Sigmoid colon (tissue), 7 donors: ENCODE measurements at regions of chr16 and their contacts with region 1.

Region 1: GRCh38 chr16:89700100-89700648 is 1.3 kb downstream of the SPATA2L start:
- DNase-seq: peak; percentile 100
- H3K4me3 ChIP-seq: peak overlapping the region; percentile 49 to 68 (median 59)
- H3K27ac ChIP-seq: peak overlapping the region; percentile 70 to 83 (median 76)
- H3K4me1 ChIP-seq: peaks cover 0 to 27% (median 25%) of the 10 kb centered on the region in 4 donors
- H3K27me3 ChIP-seq: peaks cover 0 to 28% (median 7%) of the 10 kb centered on the region in 3 donors
- CTCF ChIP-seq: peak; percentile 72 to 88 (median 78)
- EP300 ChIP-seq: peak in 2 of 4 donors; percentile 57 to 61
- POLR2A ChIP-seq: peak in 1 of 2 donors; percentile 22

Region 2: GRCh38 chr16:89093602-89094251 is 606.4 kb before region 1 on chr16 and contains the start of gene ACSF3:
- intact Hi-C with region 1: no loop called
- DNase-seq: peak; percentile 76
- H3K4me3 ChIP-seq: peak within 1 kb of the TSS; percentile 52 to 86 (median 82)
- H3K27ac ChIP-seq: peak within 1 kb of the TSS; percentile 62 to 80 (median 68)
- H3K4me1 ChIP-seq: peaks cover 0 to 32% (median 25%) of the 10 kb centered on the region in 4 donors
- H3K27me3 ChIP-seq: peaks cover 0 to 28% (median 27%) of the 10 kb centered on the region in 3 donors
- CTCF ChIP-seq: no peak
- EP300 ChIP-seq: no peak
- POLR2A ChIP-seq: no peak
- total RNA-seq, gene ACSF3: 19.7 to 31.6 (median 24.8) TPM

Region 3: DNA sequence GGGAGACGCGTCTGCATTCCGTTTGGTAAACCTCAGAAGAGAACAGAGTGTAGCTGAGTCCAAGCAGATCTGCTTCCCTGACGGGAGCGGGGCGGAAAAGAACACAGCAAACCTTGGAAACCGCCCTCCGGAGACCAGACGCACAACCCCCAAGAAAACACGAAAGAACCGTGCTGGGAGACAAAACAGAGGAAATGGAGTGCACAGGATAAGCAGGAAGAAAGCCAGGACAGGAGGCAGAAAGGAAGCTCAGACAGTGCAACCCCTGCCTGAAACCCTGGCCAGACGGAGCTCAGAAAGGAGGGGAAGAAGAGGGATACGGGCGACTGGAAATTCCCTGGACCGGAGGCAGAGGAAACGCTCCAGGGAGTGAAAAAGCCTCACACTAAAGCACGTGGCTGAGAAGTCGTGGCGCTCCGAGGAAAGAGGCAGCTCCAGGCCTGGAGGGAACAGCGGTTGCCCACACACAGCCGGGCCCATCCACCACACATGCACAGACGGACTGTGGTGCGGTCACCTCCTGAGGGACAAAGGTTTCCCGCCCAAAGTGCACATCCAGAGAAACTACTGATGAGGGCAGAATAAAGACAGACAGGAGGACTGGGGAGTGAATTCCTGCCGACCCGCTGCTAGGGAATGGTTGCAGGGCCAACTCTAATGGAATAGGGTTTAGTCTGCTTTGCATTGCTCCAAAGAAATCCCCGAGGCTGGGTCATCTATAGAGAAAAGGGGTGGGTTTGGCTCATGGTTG is 76.5 kb before region 1 on chr16:
- intact Hi-C with region 1: no loop called
- DNase-seq: no peak
- H3K4me3 ChIP-seq: no peak overlapping the region
- H3K27ac ChIP-seq: peak overlapping the region in 1 of 4 donors; percentile 1
- H3K4me1 ChIP-seq: peaks cover 0 to 5% (median 0%) of the 10 kb centered on the region in 4 donors
- H3K27me3 ChIP-seq: peaks cover 5 to 47% (median 15%) of the 10 kb centered on the region in 3 donors
- CTCF ChIP-seq: no peak
- EP300 ChIP-seq: no peak
- POLR2A ChIP-seq: no peak

Region 4: GRCh38 chr16:89720813-89721545 is 20.8 kb after region 1 on chr16 and contains the starts of genes VPS9D1 and ZNF276:
- intact Hi-C with region 1: loop called (anchors 2 kb)
- DNase-seq: peak; percentile 88
- H3K4me3 ChIP-seq: peak within 1 kb of the TSS; percentile 74 to 98 (median 77)
- H3K27ac ChIP-seq: peak within 1 kb of the TSS; percentile 96 to 99 (median 98)
- H3K4me1 ChIP-seq: peaks cover 0 to 36% (median 31%) of the 10 kb centered on the region in 4 donors
- H3K27me3 ChIP-seq: no peaks in the 10 kb centered on the region
- CTCF ChIP-seq: no peak
- EP300 ChIP-seq: no peak
- POLR2A ChIP-seq: peak; percentile 37 to 39
- total RNA-seq, gene VPS9D1: 3.8 to 10.5 (median 4.0) TPM
- total RNA-seq, gene ZNF276: 13.7 to 26.9 (median 18.2) TPM

Region 5: GRCh38 chr16:89759746-89760340 is 59.7 kb after region 1 on chr16:
- intact Hi-C with region 1: no loop called
- DNase-seq: no peak
- H3K4me3 ChIP-seq: no peak overlapping the region
- H3K27ac ChIP-seq: no peak overlapping the region
- H3K4me1 ChIP-seq: no peaks in the 10 kb centered on the region
- H3K27me3 ChIP-seq: no peaks in the 10 kb centered on the region
- CTCF ChIP-seq: no peak
- EP300 ChIP-seq: no peak
- POLR2A ChIP-seq: no peak

Region 6: GRCh38 chr16:89793955-89794354 is 93.8 kb after region 1 on chr16:
- intact Hi-C with region 1: loop called (anchors 1 kb)
- DNase-seq: no peak
- H3K4me3 ChIP-seq: no peak overlapping the region
- H3K27ac ChIP-seq: no peak overlapping the region
- H3K4me1 ChIP-seq: peaks cover 0 to 8% (median 6%) of the 10 kb centered on the region in 4 donors
- H3K27me3 ChIP-seq: no peaks in the 10 kb centered on the region
- CTCF ChIP-seq: no peak
- EP300 ChIP-seq: no peak
- POLR2A ChIP-seq: no peak

Region 7: GRCh38 chr16:89860747-89861304 is 160.7 kb after region 1 on chr16:
- intact Hi-C with region 1: loop called (anchors 2 kb)
- DNase-seq: no peak
- H3K4me3 ChIP-seq: no peak overlapping the region
- H3K27ac ChIP-seq: no peak overlapping the region
- H3K4me1 ChIP-seq: no peaks in the 10 kb centered on the region
- H3K27me3 ChIP-seq: no peaks in the 10 kb centered on the region
- CTCF ChIP-seq: peak; percentile 90 to 98 (median 94)
- EP300 ChIP-seq: no peak
- POLR2A ChIP-seq: no peak

Region 8: GRCh38 chr16:89972244-89973234 is 272.4 kb after region 1 on chr16:
- intact Hi-C with region 1: loop called (anchors 1 kb)
- DNase-seq: peak; percentile 95
- H3K4me3 ChIP-seq: peak overlapping the region; percentile 76 to 97 (median 85)
- H3K27ac ChIP-seq: peak overlapping the region; percentile 92 to 100 (median 96)
- H3K4me1 ChIP-seq: peaks cover 0 to 31% (median 26%) of the 10 kb centered on the region in 4 donors
- H3K27me3 ChIP-seq: no peaks in the 10 kb centered on the region
- CTCF ChIP-seq: no peak
- EP300 ChIP-seq: no peak
- POLR2A ChIP-seq: peak; percentile 39 to 61